A549 (cell line): ENCODE measurements at regions of chr19 and their contacts with region 1.

Region 1: GRCh38 chr19:18112989-18113478 is 15.5 kb downstream of the MAST3 start:
- DNase-seq: peak; percentile 71 to 80
- ATAC-seq: peak; percentile 74 to 86
- H3K4me3 ChIP-seq: no peak overlapping the region
- H3K27ac ChIP-seq: no peak overlapping the region
- H3K4me1 ChIP-seq: peaks cover 19% of the 10 kb centered on the region
- CTCF ChIP-seq: peak; percentile 71
- EP300 ChIP-seq: no peak
- POLR2A ChIP-seq: no peak
- RAD21 ChIP-seq: peak; percentile 78 to 87

Region 2: DNA sequence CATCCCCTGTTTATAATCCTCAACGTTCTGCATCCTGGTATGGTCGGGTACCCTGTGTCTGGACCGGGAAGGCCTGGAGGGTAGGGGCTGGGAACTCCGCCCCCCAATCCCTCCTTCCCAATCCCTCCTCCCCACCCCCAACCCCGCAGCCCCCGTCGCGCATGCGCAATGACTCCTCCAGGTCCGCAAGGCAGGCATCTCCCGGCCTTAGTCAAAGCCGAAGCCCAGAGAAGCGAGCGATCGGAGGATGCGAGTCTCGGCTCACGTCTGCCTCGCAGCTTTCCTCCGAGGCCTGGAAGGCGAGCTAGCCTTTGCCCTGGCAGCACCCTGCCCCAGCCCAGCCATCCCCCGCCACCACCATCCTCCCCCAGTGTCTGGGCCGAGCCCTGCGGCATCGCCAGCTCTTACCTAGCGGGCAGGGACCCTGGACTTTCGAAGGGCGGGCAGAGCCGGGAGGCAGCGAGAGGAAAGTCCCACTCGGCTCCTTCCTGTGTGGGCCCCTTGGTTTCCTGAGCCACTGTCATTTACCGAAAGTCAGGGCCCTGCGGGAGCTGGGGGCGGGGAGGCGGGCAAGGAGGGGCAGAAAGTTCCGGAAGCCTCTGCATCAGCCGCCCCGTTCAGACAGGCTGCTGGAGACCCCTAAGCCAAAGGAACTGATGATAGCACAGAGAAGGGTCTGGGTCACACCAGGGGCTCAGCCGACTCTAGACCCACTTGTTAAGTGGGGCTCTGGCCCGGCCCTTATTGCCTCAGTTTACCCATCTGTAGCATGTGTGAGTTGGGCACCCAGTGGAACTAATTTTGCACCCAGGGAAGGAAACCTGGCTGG is 265.3 kb before region 1 on chr19 and contains the start of gene JAK3:
- CTCF ChIA-PET with region 1: no interaction called
- POLR2A ChIA-PET with region 1: no interaction called
- DNase-seq: no peak
- ATAC-seq: no peak
- H3K4me3 ChIP-seq: no peak within 1 kb of the TSS
- H3K27ac ChIP-seq: no peak within 1 kb of the TSS
- H3K4me1 ChIP-seq: peaks cover 3% of the 10 kb centered on the region
- CTCF ChIP-seq: no peak
- EP300 ChIP-seq: no peak
- POLR2A ChIP-seq: no peak
- RAD21 ChIP-seq: no peak
- polyA plus RNA-seq, gene JAK3: 0.89 and 1.2 TPM in 2 replicates

Region 3: GRCh38 chr19:18093439-18094161 is 19.4 kb before region 1 on chr19:
- CTCF ChIA-PET with region 1: interaction called, 11 read pairs
- POLR2A ChIA-PET with region 1: no interaction called
- DNase-seq: peak; percentile 52 to 68
- ATAC-seq: peak in 1 of 2 experiments; percentile 71; a peak in 3 of 6 replicates
- H3K4me3 ChIP-seq: no peak overlapping the region
- H3K27ac ChIP-seq: 0 out of 6 replicates have a peak overlapping the region, but pooled peaks of 1 of the 2 experiments have one; percentile 5
- H3K4me1 ChIP-seq: peaks cover 6% of the 10 kb centered on the region; the same call in 1 of the 3 replicates
- CTCF ChIP-seq: no peak
- EP300 ChIP-seq: no peak
- POLR2A ChIP-seq: no peak
- RAD21 ChIP-seq: no peak

Region 4: DNA sequence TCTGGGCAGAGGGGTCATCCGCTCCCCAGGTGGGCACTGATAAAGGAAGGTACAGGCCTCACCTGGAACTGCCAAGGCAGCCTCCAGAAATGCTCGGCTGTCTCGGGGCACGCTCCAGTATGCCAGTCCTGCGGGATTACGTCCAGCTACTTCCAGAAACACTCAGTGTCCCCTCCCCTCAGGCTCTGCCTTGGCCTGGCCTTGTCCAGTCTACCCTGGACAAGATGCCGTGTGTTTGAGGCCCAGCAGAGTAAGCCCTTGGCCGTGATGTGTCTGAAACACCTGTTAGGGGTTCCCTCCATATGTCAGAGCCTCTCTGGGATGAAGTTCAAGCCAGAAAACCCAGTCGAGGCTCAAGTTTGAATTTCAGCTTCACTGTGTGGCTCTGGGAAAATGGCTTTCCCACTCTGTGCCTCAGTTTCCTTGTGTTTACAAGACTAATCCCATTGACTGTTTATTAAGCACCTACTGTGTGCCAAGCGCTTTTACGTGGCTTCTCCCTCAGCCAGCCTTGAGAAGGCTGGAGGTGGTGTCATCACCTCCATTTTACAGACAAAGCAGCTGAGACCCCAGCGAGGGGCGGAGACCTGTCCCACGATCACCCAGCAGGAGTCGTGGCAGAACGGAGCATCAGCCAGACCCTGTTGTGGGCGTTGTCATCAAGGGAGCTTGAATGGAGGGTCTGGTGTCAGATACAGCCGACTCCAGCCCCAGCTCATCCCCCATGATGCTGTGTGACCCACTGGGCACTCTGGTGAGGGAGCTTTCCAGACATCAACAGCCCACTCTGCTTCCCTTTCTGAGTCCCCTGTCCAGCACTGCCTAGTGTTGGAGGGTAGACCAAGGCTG is 38.0 kb after region 1 on chr19:
- CTCF ChIA-PET with region 1: interaction called, 10 read pairs
- POLR2A ChIA-PET with region 1: interaction called, 6 read pairs
- DNase-seq: no peak
- ATAC-seq: no peak
- H3K4me3 ChIP-seq: no peak overlapping the region; the same call in 2 of the 3 replicates
- H3K27ac ChIP-seq: peak overlapping the region; percentile 85 to 95
- H3K4me1 ChIP-seq: peaks cover 14% of the 10 kb centered on the region
- CTCF ChIP-seq: no peak
- EP300 ChIP-seq: no peak
- POLR2A ChIP-seq: no peak
- RAD21 ChIP-seq: no peak

Region 5: DNA sequence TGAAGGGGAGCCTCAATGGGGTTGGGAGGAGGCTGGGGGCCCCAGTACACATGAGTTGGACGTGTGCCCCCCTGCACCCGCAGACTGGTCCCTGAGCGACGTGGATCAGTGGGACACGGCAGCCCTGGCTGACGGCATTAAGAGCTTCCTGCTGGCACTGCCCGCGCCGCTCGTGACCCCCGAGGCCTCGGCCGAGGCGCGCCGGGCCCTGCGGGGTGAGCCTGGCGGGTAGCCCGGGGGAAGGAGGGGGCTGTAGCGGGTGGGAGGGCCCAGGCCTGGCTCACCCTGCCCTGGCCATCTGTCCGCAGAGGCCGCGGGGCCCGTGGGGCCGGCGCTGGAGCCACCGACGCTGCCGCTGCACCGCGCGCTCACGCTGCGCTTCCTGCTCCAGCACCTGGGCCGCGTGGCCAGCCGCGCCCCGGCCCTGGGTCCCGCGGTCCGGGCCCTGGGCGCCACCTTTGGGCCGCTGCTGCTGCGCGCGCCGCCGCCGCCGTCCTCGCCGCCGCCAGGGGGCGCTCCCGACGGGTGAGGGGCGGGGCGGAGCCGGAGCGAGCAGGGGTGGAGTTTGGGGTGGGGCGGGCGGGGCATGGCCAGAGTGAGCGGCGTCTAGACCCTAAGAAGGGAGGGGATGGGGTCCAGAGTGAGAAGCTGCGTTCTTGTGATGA is 48.1 kb after region 1 on chr19:
- CTCF ChIA-PET with region 1: interaction called, 11 read pairs
- POLR2A ChIA-PET with region 1: interaction called, 5 read pairs
- DNase-seq: peak; percentile 57 to 62
- ATAC-seq: peak; percentile 80 to 83
- H3K4me3 ChIP-seq: peak overlapping the region; percentile 42
- H3K27ac ChIP-seq: peak overlapping the region; percentile 91 to 96
- H3K4me1 ChIP-seq: peaks cover 22% of the 10 kb centered on the region
- CTCF ChIP-seq: peak; percentile 91
- EP300 ChIP-seq: no peak
- POLR2A ChIP-seq: peak; percentile 37
- RAD21 ChIP-seq: no peak; a peak in 1 of 5 replicates

Region 6: DNA sequence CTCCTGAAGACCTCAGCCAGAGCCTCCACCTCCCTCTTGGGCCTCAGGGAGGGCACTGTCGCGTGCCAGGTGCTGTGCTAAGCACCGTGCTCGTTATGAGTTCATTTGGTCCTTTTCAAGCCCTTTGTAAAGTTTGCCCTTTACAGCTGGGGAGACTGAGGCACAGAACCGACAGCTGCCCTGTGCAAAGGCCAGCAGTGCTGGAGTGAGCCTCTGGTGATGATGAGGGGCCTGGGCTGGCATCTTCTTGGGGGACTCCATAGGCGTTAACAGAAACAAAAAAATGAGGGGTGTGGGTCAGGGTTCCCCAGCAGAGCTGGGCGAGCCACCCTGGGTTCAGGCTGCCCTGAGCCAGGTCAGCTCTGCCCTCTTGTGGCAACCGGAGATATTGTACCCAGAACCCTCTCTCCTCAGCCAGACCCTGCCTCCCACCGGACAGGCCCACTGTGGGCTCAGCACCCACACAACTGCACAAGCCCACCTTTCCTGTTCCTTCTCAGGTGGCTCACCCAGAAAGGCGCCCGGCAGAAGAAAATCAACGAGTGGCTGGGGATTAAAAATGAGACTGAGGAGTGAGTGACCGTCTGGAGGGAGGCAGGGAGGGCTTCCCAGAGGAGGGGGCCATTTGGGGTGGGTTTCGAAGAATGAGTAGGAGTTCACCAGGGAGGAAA is 55.1 kb after region 1 on chr19:
- CTCF ChIA-PET with region 1: interaction called, 12 read pairs
- POLR2A ChIA-PET with region 1: interaction called, 5 read pairs
- DNase-seq: peak in 1 of 2 experiments; percentile 81
- ATAC-seq: peak; percentile 88 to 93
- H3K4me3 ChIP-seq: no peak overlapping the region
- H3K27ac ChIP-seq: no peak overlapping the region
- H3K4me1 ChIP-seq: peaks cover under 1% of the 10 kb centered on the region; the same call in 1 of the 3 replicates
- CTCF ChIP-seq: peak; percentile 51
- EP300 ChIP-seq: no peak
- POLR2A ChIP-seq: no peak
- RAD21 ChIP-seq: peak; percentile 52 to 58